Activated B cell treated with CpG ODN at 0.5 μM for 24 hours (primary cell): ENCODE measurements at regions of chr3 and their contacts with region 1.

Region 1: DNA sequence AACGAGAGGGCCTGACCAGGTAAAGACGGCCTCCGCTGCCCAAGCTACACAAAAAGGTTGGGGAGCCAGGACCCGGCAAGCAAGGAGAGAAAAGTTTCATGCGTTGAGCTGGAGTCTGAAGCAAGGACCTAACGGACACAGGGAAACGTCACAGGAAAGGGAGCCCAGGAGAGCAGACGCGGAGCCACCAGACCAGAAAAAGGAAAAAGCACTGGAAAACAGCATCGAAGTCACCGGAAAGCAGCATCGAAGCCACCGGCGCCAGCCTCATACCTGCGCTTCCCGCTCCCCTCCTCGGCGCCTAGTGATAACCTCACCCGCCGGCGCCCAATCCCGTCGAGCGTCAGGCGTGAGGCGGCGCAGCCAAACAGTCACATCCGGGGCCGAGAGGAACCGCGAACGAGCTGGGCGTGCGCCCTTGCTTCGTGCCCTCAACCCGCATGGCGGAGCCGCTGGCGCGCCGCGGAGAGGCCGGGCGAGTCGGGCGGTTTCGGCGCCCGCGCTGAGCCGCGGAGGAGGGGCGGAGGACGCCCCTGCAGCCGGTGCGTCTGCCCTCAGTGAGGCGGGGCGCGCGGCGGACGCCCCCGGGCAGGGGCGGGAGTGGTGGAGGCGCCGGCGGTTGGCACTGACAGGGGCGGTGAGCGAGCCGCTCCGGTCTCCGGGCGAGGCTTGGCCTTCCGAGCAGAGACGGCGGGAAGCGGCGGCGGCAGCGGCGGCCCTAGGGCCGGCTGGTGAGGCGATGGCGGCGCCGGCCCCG is at the starts of genes FBXO45 and WDR53:
- DNase-seq: peak; percentile 92
- ATAC-seq: peak; percentile 90
- H3K4me3 Mint-ChIP-seq: peak within 1 kb of the TSS; percentile 98
- H3K27ac Mint-ChIP-seq: peak within 1 kb of the TSS; percentile 97
- H3K4me1 Mint-ChIP-seq: peaks cover 29% of the 10 kb centered on the region
- H3K27me3 Mint-ChIP-seq: no peaks in the 10 kb centered on the region
- CTCF ChIP-seq: no peak
- total RNA-seq, gene FBXO45: 5.7 and 6.5 TPM in 2 replicates
- total RNA-seq, gene WDR53: 14.1 and 14.3 TPM in 2 replicates

Region 2: DNA sequence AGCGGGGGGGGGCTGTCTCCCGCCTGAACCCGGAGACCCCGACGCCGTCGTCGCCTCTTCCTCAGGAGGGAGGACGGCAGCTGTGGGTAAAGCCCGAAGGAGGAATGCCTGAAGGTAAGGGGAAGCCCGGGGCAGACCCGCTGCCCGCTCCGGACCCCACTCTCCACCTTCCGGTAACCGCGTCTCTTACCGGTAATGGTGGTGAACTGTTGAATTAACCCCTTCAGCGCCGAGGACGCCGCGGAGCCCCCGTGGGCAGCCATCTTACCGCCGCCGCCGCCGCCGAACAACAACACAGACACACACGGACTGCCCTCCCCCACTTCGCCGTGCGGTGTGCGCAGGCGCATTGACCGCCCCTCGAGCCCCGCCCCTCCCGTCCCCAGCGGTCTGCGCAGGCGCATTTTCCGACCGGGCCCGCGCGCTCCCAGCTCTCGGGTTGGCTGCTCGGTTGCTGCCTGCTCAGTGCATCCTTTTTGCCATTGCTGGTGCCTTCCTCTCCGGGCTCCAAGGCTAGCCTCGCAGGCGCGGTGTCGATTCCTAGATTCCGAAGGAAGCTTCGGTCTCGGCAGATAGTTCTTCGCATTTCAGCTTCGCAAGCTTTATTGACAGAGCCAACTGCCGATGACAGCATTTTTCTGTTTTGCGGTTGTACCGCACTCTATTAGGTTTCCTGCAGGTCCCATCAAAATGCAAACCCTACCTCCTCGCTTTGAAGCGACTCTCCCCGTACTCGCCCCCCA is 136.1 kb before region 1 on chr3 and contains the start of gene UBXN7:
- CTCF ChIA-PET with region 1: no interaction called
- POLR2A ChIA-PET with region 1: no interaction called
- intact Hi-C with region 1: loop called (anchors 1 kb)
- DNase-seq: peak; percentile 92
- ATAC-seq: peak; percentile 81
- H3K4me3 Mint-ChIP-seq: peak within 1 kb of the TSS; percentile 96
- H3K27ac Mint-ChIP-seq: peak within 1 kb of the TSS; percentile 80
- H3K4me1 Mint-ChIP-seq: peaks cover 22% of the 10 kb centered on the region
- H3K27me3 Mint-ChIP-seq: no peaks in the 10 kb centered on the region
- CTCF ChIP-seq: no peak
- total RNA-seq, gene UBXN7: 60.8 and 66.5 TPM in 2 replicates

Region 3: DNA sequence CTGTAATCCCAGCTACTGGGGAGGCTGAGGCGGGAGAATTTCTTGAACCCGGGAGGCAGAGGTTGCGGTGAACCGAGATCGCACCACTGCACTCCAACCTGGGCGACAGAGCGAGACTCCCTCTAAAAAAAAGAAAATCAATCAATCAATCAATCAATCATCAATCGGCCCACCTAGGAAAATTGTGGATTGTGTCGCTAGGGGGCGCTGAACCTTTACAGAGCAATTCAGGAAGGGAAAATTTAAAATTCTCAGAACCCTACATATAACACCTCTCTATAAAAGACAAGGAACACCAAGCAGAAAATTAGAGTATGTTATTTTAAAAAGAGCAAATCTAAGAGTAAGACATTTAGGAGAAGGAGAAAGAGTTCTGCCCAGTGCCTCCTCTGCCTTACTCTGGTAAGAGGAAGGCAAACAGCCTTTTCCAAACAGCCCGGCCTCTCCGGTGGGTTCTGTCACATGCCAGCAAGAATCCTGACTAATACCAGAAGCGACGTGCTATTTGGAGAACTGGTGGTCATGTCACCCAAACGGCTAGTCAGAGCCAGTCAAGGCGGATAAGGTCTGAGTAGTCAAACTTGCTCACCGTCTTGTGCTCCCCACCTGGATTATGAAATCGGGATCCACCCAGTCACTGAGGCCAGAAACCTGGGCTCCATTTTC is 31.0 kb before region 1 on chr3:
- CTCF ChIA-PET with region 1: no interaction called
- POLR2A ChIA-PET with region 1: no interaction called
- intact Hi-C with region 1: loop called (anchors 1 kb)
- DNase-seq: peak; percentile 25
- ATAC-seq: peak; percentile 34
- H3K4me3 Mint-ChIP-seq: no peak overlapping the region
- H3K27ac Mint-ChIP-seq: no peak overlapping the region
- H3K4me1 Mint-ChIP-seq: peaks cover 2% of the 10 kb centered on the region
- H3K27me3 Mint-ChIP-seq: no peaks in the 10 kb centered on the region
- CTCF ChIP-seq: peak; percentile 23

Region 4: DNA sequence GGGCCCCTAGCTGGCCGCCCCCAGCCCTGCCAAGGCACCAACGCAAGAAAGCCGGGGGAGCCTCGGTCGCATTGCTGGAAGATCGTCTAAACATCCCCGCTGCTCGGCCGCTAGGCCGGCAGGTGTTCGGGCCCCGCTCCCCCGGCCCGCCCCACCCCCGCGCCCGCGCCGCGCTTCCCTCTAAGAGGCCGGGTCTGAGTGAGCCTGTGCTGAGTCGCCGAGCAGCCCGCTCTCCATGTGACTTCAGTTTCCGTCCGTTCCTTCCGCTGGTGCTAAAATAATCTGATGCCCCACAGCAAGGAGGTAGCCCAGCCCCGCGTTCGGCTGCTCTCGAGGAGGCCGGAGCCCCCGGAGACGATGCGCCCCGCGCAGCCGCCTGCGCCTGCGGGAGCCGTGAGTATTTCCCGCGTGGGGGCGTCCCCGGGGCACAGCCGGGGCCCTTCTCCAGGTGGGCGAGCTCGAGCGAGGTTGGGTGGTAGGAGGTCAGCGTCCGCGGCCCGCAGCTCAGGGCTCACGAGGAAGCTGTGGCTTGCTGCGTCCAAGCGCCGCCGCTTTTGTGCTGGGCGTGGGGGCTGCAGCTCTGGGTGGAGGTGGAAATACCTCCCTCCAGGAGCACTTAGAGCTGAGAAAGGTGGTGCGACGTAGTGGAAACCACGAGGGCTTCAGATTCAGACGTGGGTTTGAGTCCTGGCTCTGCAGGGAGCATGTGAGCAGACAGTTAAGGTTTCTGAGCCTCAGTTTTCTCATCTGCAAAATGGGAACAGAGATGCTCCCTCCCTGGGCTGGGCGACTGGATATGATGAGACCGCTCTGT is 71.3 kb after region 1 on chr3 and contains the start of gene NRROS:
- CTCF ChIA-PET with region 1: no interaction called
- POLR2A ChIA-PET with region 1: interaction called, 5 read pairs
- intact Hi-C with region 1: loop called (anchors 1 kb)
- DNase-seq: peak; percentile 67
- ATAC-seq: peak; percentile 51
- H3K4me3 Mint-ChIP-seq: peak within 1 kb of the TSS; percentile 90
- H3K27ac Mint-ChIP-seq: peak within 1 kb of the TSS; percentile 99
- H3K4me1 Mint-ChIP-seq: peaks cover 78% of the 10 kb centered on the region
- H3K27me3 Mint-ChIP-seq: no peaks in the 10 kb centered on the region
- CTCF ChIP-seq: no peak
- total RNA-seq, gene NRROS: 88.5 and 92.4 TPM in 2 replicates

Region 5: DNA sequence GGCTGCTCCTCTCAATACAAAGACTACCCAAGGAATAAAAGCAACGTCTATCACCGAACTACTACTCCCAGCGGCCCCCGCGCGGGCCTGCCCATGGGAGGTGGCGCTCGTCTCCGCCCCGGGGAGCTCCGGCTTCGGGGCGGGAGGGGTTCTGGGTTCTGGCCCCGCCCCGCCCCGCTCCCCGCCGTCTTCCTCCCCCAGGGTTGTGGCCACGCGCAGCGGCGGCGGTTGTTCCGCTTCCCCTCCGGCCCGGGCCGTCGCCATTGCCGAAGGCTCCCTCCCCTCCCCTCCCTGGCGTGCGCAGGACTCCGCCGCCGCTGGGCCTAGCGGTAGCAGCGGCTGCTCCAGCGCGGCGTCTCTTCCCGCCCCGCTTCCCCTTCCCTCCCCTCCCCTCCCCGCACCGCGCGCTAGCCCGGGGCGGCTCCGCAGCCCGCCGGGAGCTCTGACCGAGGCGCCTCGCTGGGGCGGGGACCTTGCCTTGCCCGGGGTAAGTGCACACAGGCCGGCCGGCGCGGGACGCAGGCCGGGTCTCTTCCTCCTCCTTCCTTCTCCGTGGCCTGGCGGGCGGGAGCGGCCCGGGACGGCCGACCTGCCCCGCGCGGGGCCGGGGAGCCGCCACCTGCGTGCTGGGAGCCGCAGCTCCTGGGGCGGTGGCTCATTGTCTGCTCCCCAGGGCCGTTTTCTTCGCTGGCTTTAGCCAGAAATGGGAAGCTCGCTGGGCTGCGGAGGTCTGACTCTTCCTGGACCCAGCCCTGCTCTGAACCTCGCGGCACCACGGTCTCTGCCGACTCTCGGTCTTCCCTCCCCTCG is 171.5 kb after region 1 on chr3 and contains the start of gene PAK2:
- CTCF ChIA-PET with region 1: no interaction called
- POLR2A ChIA-PET with region 1: interaction called, 18 read pairs
- intact Hi-C with region 1: loop called (anchors 2 kb)
- DNase-seq: peak; percentile 86
- ATAC-seq: peak; percentile 92
- H3K4me3 Mint-ChIP-seq: peak within 1 kb of the TSS; percentile 100
- H3K27ac Mint-ChIP-seq: peak within 1 kb of the TSS; percentile 99
- H3K4me1 Mint-ChIP-seq: peaks cover 33% of the 10 kb centered on the region
- H3K27me3 Mint-ChIP-seq: no peaks in the 10 kb centered on the region
- CTCF ChIP-seq: no peak
- total RNA-seq, gene PAK2: 73.7 and 87.1 TPM in 2 replicates

Region 6: GRCh38 chr3:196942226-196942914 is 373.9 kb after region 1 on chr3 and contains the start of gene NCBP2:
- CTCF ChIA-PET with region 1: no interaction called
- POLR2A ChIA-PET with region 1: interaction called, 12 read pairs
- intact Hi-C with region 1: loop called (anchors 1 kb)
- DNase-seq: peak; percentile 99
- ATAC-seq: peak; percentile 91
- H3K4me3 Mint-ChIP-seq: peak within 1 kb of the TSS; percentile 95
- H3K27ac Mint-ChIP-seq: peak within 1 kb of the TSS; percentile 95
- H3K4me1 Mint-ChIP-seq: peaks cover 57% of the 10 kb centered on the region
- H3K27me3 Mint-ChIP-seq: no peaks in the 10 kb centered on the region
- CTCF ChIP-seq: no peak
- total RNA-seq, gene NCBP2: 77.8 and 85.1 TPM in 2 replicates